Calu3 (cell line): ENCODE measurements at regions of chr10 and their contacts with region 1.

Region 1: GRCh38 chr10:45464958-45465567 is 91.0 kb downstream of the ALOX5 start:
- DNase-seq: peak; percentile 84
- H3K4me3 Mint-ChIP-seq: no peak overlapping the region
- H3K27ac Mint-ChIP-seq: no peak overlapping the region
- H3K4me1 Mint-ChIP-seq: no peaks in the 10 kb centered on the region
- H3K27me3 Mint-ChIP-seq: no peaks in the 10 kb centered on the region
- CTCF ChIP-seq: peak; percentile 86

Region 2: DNA sequence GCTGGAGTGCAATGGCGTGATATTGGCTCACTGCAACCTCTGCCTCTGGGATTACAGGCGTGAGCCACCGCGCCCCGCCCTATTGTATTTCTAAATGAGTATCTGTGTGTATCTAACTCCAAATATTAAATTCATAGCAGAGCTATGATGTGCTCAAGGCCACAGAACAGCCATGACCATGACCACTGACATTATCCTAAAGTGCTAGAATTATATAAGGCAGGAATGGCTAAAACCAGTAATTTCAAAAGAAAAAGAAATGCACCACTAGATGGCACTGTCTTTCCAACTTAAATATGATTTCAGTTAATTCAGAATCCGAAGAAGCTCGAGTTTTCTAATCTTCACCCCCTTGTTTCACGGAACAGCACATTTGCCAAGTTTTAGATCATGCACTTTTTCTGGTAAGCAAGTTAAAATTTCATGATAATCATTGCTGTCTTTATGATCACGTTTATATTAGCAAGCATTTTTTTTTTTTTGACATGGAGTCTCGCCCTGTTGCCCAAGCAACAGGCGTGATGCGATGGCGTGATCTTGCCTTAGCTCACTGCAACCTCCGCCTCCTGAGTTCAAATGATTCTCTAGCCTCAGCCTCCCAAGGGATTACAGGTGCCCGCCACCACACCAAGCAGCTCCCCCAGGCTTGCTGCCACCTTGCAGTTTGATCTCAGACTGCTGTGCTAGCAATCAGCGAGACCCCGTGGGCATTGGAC is 214.9 kb before region 1 on chr10:
- CTCF ChIA-PET with region 1: interaction called, 5 read pairs
- intact Hi-C with region 1: loop called (anchors 2 kb)
- DNase-seq: peak; percentile 4
- H3K4me3 Mint-ChIP-seq: peak overlapping the region; percentile 49
- H3K27ac Mint-ChIP-seq: no peak overlapping the region
- H3K4me1 Mint-ChIP-seq: no peaks in the 10 kb centered on the region
- H3K27me3 Mint-ChIP-seq: peaks cover 45% of the 10 kb centered on the region
- CTCF ChIP-seq: peak; percentile 31